Activated CD4-positive, alpha-beta memory T cell treated with anti-CD3 and anti-CD28 coated beads for 36 hours (primary cell): ENCODE measurements at regions of chr2 and their contacts with region 1.

Region 1: DNA sequence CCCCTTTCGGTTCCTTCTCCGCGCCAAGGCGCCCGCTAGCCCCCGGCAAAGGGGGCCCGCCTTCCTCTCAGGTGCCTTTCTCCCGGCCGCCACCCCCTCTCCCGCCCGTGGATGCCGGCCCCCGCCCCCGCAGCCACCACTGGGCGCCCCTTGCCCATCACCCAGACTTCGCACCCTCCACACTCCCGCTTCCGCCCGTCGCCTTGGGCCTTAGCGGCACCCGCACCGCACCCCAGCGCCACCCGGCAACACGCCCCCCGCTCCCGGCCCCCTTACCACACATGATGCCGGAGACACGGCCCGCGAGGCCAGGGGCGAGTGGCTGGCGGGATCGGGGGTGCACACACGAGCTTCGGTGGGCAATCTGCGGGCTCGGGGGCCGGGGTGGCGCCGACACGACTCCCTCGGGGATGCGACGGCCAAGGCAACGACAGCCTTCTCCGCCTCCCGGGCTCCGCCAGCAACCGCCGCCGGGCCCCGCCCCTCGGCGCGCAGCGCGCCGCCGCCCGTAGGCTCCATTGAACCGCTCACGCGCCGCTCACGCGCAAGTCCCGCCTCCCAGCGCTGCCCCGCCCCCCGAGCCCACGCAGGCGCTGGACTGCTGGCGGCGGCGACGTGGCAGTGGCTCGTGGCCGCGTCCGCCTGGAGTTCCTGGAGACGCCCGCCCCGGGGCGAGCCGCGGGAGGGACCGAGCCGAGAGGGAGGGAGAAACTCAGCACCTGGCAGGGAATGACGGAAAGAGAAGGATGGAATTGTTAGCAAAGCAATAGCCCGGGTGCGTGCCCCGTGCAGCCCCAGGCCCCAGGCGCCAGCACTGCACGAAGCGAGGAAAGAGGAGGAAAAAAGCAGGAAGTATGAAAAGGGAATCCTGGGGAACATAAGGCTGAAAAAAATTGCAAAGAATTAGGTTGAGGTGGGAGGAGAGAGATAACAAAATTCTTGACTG is at the start of gene GFPT1:
- DNase-seq: peak; percentile 95
- H3K4me3 Mint-ChIP-seq: peak within 1 kb of the TSS; percentile 85
- H3K27ac Mint-ChIP-seq: peak within 1 kb of the TSS; percentile 80
- H3K4me1 Mint-ChIP-seq: peaks cover 39% of the 10 kb centered on the region
- H3K27me3 Mint-ChIP-seq: no peaks in the 10 kb centered on the region
- total RNA-seq, gene GFPT1: 39.8 to 43.6 TPM

Region 2: DNA sequence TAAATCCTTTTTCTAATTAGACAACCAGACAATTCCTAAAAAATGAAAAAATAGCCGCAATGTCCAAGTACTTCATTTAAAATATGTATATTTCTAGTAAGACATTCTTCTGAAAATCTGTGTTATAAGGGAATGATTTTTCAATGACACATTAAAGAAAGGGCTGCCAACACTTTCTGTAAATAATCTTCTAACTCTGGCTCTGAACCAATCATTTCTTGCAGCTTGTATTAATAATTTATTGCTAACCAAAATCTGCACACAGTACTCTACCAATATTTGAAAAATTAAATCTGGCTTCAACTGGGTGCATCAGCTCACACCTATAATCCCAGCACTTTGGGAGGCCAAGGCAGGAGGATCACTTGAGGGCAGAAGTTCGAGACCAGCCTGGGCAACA is 41.9 kb after region 1 on chr2:
- CTCF ChIA-PET with region 1: no interaction called
- POLR2A ChIA-PET with region 1: no interaction called
- intact Hi-C with region 1: loop called (anchors 5 kb)
- DNase-seq: no peak
- H3K4me3 Mint-ChIP-seq: no peak overlapping the region
- H3K27ac Mint-ChIP-seq: no peak overlapping the region
- H3K4me1 Mint-ChIP-seq: peaks cover 3% of the 10 kb centered on the region
- H3K27me3 Mint-ChIP-seq: no peaks in the 10 kb centered on the region